ENCODE measurements at regions of chr17 and their contacts with region 1.

Region 1: GRCh38 chr17:72338847-72339790 is 218.3 kb downstream of the SOX9 start:
- DNase-seq: peak; percentile 79
- H3K4me3 Mint-ChIP-seq: peak overlapping the region; percentile 12
- H3K27ac Mint-ChIP-seq: peak overlapping the region; percentile 78
- H3K4me1 Mint-ChIP-seq: peaks cover 40% of the 10 kb centered on the region
- H3K27me3 Mint-ChIP-seq: peaks cover 1% of the 10 kb centered on the region
- CTCF ChIP-seq: no peak

Region 2: GRCh38 chr17:71919186-71919585 is 419.9 kb before region 1 on chr17:
- CTCF ChIA-PET with region 1: no interaction called
- intact Hi-C with region 1: no loop called
- DNase-seq: no peak
- H3K4me3 Mint-ChIP-seq: no peak overlapping the region
- H3K27ac Mint-ChIP-seq: no peak overlapping the region
- H3K4me1 Mint-ChIP-seq: peaks cover 18% of the 10 kb centered on the region
- H3K27me3 Mint-ChIP-seq: no peaks in the 10 kb centered on the region
- CTCF ChIP-seq: no peak

Region 3: DNA sequence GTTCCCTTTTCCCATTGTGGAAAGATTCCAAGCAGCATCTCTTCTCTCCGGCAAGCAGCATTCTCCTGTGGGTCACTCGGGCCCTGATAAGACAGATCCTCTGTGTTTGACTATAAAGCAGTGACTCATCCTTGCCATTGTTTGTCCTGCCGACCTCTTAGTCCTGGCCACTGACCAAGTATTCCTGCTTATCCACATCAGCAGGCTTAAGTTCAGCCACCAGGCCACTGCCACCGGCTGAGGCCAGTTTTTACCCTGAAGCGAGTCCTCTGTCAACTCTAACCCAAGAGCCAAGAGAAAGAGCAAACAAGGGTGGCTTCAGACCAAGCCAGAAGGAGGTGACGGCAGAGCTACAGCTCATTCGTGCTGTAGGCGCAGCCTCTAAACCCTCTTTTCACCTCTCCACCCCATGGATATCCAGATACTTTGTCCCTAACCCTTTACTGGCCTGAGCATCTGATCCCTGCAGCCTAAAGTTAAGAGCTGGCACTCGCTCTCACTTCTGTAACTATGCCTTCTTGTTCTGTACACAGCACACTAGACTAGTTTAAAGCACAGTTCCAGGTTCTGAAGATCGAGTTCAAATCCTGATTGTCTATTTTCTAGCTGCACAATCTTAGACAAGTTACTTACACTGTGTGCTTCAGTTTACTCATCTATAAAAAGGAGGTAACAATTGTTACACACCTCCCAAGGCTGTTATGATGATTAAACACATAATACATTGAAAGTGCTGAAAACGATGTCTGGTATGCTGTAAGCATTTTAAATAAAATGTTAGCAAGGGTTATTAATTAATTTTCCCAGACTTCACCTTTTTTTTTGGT is 187.3 kb before region 1 on chr17:
- CTCF ChIA-PET with region 1: no interaction called
- intact Hi-C with region 1: loop called (anchors 5 kb)
- DNase-seq: peak; percentile 62
- H3K4me3 Mint-ChIP-seq: peak overlapping the region; percentile 33
- H3K27ac Mint-ChIP-seq: peak overlapping the region; percentile 82
- H3K4me1 Mint-ChIP-seq: peaks cover 32% of the 10 kb centered on the region
- H3K27me3 Mint-ChIP-seq: peaks cover 22% of the 10 kb centered on the region
- CTCF ChIP-seq: no peak